K562 (cell line): ENCODE measurements at regions of chr22 and their contacts with region 1.

Region 1: DNA sequence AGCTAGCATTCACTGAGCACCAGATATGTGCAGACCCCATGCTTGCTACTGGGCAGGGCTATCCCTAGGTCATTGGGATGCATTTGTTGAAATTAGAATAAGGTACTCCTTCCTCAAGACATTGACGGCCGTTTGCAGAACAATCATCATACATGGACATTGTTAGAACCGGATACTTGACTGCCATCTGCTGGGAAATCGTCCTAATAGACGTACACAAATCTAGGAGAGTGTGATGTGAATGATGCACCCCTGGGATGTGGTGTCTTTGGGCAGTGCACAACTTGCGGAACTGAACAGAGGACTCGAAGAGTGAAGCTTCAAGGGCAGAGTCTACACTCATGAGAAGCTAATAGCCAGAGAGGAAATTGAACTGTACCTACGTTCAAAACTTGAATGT is 35.9 kb downstream of the MYO18B start:
- DNase-seq: peak in 2 of 4 experiments; percentile 19 to 31
- ATAC-seq: peak; percentile 55; the same call in 2 of the 3 replicates
- H3K4me3 ChIP-seq: no peak overlapping the region
- H3K27ac ChIP-seq: no peak overlapping the region
- H3K4me1 ChIP-seq: no peaks in the 10 kb centered on the region; a peak in 1 of 5 replicates
- H3K27me3 ChIP-seq: no peaks in the 10 kb centered on the region
- CTCF ChIP-seq: peak in 2 of 3 experiments; percentile 22 to 39; a peak in 2 of 6 replicates
- EP300 ChIP-seq: no peak
- POLR2A ChIP-seq: no peak
- RAD21 ChIP-seq: 0 out of 4 replicates have a peak, but pooled peaks of 1 of the 2 experiments have one; percentile 24

Region 2: DNA sequence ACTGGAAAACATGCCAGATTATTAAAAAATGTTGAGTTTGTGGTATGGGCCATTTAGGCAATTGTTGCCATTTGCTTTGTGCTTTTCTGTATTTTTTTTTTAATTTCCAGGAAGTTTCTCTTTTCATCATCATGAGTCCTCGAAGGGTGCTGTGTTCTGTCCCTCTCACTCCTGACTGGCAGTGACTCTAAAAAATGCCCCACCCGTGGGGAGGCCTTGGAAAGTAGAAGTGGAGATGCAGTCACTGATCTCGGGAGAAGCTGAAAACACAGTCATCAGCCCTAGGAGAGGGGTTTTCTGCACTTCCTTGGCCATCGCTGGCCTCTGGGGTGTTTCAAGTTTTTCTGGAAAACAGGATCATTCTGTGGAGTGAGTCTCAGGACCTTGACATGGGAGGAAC is 311.9 kb before region 1 on chr22:
- CTCF ChIA-PET with region 1: interaction called, 14 read pairs
- POLR2A ChIA-PET with region 1: interaction called, 3 read pairs
- in situ Hi-C with region 1: loop called (anchors 5 kb)
- intact Hi-C with region 1: loop called (anchors 2 kb)
- DNase-seq: no peak
- ATAC-seq: no peak
- H3K4me3 ChIP-seq: no peak overlapping the region
- H3K27ac ChIP-seq: no peak overlapping the region
- H3K4me1 ChIP-seq: no peaks in the 10 kb centered on the region
- H3K27me3 ChIP-seq: no peaks in the 10 kb centered on the region
- CTCF ChIP-seq: no peak
- EP300 ChIP-seq: no peak
- POLR2A ChIP-seq: no peak
- RAD21 ChIP-seq: no peak

Region 3: DNA sequence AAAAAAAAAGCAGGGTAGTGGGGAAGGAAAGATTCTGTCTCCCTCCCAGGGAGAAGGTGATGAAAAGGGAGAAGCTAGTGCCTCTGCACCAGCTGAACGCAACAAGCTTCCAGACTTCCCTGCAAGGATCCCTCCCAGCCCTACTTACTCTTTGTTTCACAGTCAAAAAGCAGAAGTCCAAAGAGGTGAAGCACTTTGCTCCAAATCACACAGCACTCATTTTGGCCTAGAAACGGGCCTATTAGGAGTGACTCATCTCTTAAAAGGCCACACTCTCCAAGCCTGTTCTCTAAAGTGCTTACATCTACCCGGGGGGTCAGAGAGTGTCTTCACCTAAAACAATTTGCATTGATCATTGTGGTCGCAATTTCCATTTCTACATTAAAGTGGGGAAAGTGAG is 231.1 kb before region 1 on chr22:
- CTCF ChIA-PET with region 1: no interaction called
- POLR2A ChIA-PET with region 1: no interaction called
- in situ Hi-C with region 1: no loop called
- intact Hi-C with region 1: loop called (anchors 10 kb)
- DNase-seq: no peak
- ATAC-seq: no peak
- H3K4me3 ChIP-seq: no peak overlapping the region
- H3K27ac ChIP-seq: no peak overlapping the region
- H3K4me1 ChIP-seq: peaks cover 5 to 14% of the 10 kb centered on the region in 2 experiments; a peak in 4 of 5 replicates
- H3K27me3 ChIP-seq: no peaks in the 10 kb centered on the region; a peak in 2 of 5 replicates
- CTCF ChIP-seq: no peak
- EP300 ChIP-seq: no peak
- POLR2A ChIP-seq: no peak
- RAD21 ChIP-seq: no peak

Region 4: DNA sequence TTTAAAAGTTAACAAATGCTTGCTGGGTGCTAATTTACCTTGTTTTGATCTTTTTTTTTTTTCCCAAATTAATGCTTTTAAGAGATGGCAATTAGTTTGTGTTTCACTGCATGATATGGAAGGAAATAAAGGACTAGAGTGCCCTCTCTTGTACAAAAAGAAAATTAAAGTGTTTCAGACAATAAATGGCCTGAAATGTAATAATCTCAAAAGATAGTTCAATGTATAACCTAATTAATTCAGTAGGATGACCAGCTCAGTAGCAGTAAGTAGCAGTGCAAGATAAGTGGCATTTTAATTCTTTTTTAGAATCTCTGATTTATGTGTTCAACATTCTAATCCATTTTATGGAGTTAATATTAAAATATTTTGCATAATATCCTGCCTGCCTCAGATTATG is 75.8 kb before region 1 on chr22:
- CTCF ChIA-PET with region 1: no interaction called
- POLR2A ChIA-PET with region 1: no interaction called
- in situ Hi-C with region 1: no loop called
- intact Hi-C with region 1: loop called (anchors 1 kb)
- DNase-seq: no peak
- ATAC-seq: no peak
- H3K4me3 ChIP-seq: no peak overlapping the region
- H3K27ac ChIP-seq: no peak overlapping the region
- H3K4me1 ChIP-seq: no peaks in the 10 kb centered on the region
- H3K27me3 ChIP-seq: no peaks in the 10 kb centered on the region
- CTCF ChIP-seq: peak in 2 of 3 experiments; percentile 16 to 51; a peak in 2 of 6 replicates
- EP300 ChIP-seq: no peak
- POLR2A ChIP-seq: no peak
- RAD21 ChIP-seq: peak; percentile 47 to 68

Region 5: DNA sequence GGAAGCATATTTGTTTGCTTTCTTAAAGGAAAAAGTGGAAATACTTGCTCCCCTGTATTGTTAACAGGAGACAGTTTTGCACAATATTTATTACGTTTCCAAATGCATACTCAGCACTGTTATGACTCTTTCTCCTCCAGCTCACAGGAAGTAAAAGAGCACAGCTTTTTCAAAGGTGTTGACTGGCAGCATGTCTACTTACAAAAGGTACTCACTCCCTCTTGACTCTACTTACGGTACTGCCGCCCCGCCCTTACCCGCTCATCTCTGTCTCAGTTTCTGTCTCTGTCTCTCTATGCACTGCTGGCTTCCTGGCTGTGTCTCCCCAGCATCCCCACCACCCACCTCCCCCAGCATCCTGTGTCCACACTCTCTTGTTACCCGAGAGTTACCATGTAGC is 68.1 kb before region 1 on chr22:
- CTCF ChIA-PET with region 1: no interaction called
- POLR2A ChIA-PET with region 1: no interaction called
- in situ Hi-C with region 1: loop called (anchors 5 kb)
- intact Hi-C with region 1: no loop called
- DNase-seq: no peak
- ATAC-seq: no peak
- H3K4me3 ChIP-seq: no peak overlapping the region
- H3K27ac ChIP-seq: no peak overlapping the region
- H3K4me1 ChIP-seq: no peaks in the 10 kb centered on the region
- H3K27me3 ChIP-seq: no peaks in the 10 kb centered on the region
- CTCF ChIP-seq: no peak
- EP300 ChIP-seq: no peak
- POLR2A ChIP-seq: no peak
- RAD21 ChIP-seq: no peak

Region 6: DNA sequence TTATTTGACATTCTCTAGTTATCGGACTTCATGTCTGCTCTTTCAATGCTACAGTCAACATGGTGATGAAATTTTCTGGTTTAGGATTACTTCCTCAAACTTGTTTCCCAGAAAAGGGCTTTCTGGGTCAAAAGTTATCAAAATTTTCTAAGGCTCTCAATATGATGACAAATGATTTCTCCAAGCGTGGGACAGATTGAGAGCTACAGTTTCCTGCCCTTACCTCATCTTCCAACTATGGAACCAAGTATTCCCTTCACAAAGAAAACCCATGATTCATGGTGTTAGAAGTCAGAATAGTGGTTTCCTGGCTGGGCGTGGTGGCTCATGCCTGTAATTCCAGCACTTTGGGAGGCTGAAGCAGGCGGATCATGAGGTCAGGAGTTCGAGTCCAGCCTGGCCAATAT is 18.0 kb before region 1 on chr22:
- CTCF ChIA-PET with region 1: no interaction called
- POLR2A ChIA-PET with region 1: no interaction called
- in situ Hi-C with region 1: no loop called
- intact Hi-C with region 1: no loop called
- DNase-seq: peak in 2 of 4 experiments; percentile 30 to 69
- ATAC-seq: peak; percentile 63
- H3K4me3 ChIP-seq: no peak overlapping the region
- H3K27ac ChIP-seq: 0 out of 3 replicates have a peak overlapping the region, but pooled peaks have one; percentile 4
- H3K4me1 ChIP-seq: peaks cover 22% of the 10 kb centered on the region in 2 experiments; a peak in 4 of 5 replicates
- H3K27me3 ChIP-seq: no peaks in the 10 kb centered on the region
- CTCF ChIP-seq: no peak
- EP300 ChIP-seq: peak; percentile 83
- POLR2A ChIP-seq: no peak
- RAD21 ChIP-seq: no peak